ENCODE measurements at regions of chr19 and their contacts with region 1.

Region 1: GRCh38 chr19:15154002-15154612 is 46.7 kb downstream of the NOTCH3 start:
- DNase-seq: peak in 7 of 14 experiments; percentile 12 to 47 (median 33)
- ATAC-seq: peak; percentile 52
- H3K4me3 ChIP-seq: no peak overlapping the region
- H3K4me3 Mint-ChIP-seq: no peak overlapping the region
- H3K27ac ChIP-seq: no peak overlapping the region
- H3K27ac Mint-ChIP-seq: no peak overlapping the region
- H3K4me1 ChIP-seq: no peaks in the 10 kb centered on the region
- H3K4me1 Mint-ChIP-seq: peaks cover 6% of the 10 kb centered on the region
- H3K27me3 ChIP-seq: peaks cover 0 to 5% of the 10 kb centered on the region in 2 experiments
- H3K27me3 Mint-ChIP-seq: peaks cover 17% of the 10 kb centered on the region
- CTCF ChIP-seq: peak; percentile 47

Region 2: DNA sequence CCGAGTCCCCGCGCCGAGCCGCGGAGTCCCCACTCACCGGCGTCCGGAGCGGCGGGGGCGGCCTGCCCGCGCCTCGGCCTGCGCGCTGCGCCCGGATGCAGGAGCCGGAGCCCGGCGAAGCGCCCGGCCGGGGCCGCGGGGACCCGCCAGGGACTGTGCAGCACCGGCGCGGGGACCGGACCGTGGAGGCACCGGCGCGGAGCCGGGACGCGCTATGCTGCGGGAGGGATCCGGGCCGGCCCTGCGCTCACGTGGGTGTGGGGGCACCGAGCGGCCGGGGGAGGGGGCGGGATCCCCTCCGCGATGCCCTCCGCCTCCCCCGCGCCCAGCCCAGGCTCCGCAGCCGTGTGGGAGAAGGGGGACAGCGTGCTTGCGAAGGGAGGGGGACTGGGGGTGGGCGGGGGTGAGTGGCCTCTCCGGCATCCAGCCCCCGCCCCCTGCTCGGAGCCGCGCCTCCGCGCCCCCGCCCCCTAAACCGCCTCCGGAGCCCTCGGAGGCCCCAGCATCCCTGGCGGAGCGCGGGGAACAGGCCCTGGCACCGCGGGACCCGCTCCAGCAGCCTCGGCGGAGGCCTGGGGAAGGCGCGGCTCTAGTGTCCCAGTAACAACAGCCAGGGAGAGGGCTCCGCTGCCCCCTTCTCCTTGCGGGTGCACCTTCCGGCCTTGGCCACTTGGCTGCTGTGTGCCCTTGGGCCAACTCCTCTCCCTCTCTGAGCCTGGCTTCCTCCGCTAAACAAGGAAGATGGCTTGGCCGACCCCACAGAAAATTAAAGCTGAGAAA is 174.4 kb before region 1 on chr19 and contains the start of gene SLC1A6:
- CTCF ChIA-PET with region 1: no interaction called
- POLR2A ChIA-PET with region 1: no interaction called
- intact Hi-C with region 1: no loop called
- DNase-seq: no peak
- ATAC-seq: no peak
- H3K4me3 ChIP-seq: no peak within 1 kb of the TSS
- H3K4me3 Mint-ChIP-seq: peak within 1 kb of the TSS; percentile 56
- H3K27ac ChIP-seq: no peak within 1 kb of the TSS
- H3K27ac Mint-ChIP-seq: no peak within 1 kb of the TSS
- H3K4me1 ChIP-seq: no peaks in the 10 kb centered on the region
- H3K4me1 Mint-ChIP-seq: peaks cover 4% of the 10 kb centered on the region
- H3K27me3 ChIP-seq: peaks cover 41 to 49% of the 10 kb centered on the region in 2 experiments
- H3K27me3 Mint-ChIP-seq: peaks cover 73% of the 10 kb centered on the region
- CTCF ChIP-seq: no peak
- total RNA-seq, gene SLC1A6: not detected

Region 3: DNA sequence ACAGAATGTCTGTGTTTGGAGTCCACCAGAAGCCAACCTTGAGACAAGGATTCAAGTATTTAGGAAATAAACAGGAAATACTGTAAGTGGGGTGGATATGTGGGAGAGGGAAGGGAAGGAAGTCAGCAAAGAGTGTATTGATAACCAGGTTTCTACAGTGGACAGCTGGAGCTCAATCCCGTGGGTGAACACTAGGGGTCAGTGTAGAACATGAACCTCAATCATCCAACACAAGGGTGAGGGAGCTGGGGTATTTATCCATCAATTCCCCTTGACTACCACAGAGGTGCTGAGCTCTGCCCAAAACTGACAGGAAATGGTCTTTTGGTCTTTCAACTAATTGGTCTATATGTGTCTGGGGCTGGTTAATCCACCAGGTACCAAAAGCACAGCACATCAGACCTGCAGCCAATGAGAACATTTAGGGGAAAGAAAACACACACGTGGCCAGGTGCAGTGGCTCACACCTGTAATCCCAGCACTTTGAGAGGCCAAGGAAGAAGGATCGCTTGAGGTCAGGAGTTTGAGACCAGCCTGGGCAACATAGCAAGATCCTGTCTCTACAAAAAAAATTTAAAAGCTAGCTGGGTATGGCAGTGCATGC is 52.5 kb before region 1 on chr19:
- CTCF ChIA-PET with region 1: interaction called, 9 read pairs
- POLR2A ChIA-PET with region 1: no interaction called
- intact Hi-C with region 1: loop called (anchors 1 kb)
- DNase-seq: peak in 13 of 14 experiments; percentile 24 to 75 (median 42)
- ATAC-seq: peak; percentile 79
- H3K4me3 ChIP-seq: no peak overlapping the region
- H3K4me3 Mint-ChIP-seq: no peak overlapping the region
- H3K27ac ChIP-seq: no peak overlapping the region
- H3K27ac Mint-ChIP-seq: no peak overlapping the region
- H3K4me1 ChIP-seq: no peaks in the 10 kb centered on the region
- H3K4me1 Mint-ChIP-seq: peaks cover 7% of the 10 kb centered on the region
- H3K27me3 ChIP-seq: no peaks in the 10 kb centered on the region
- H3K27me3 Mint-ChIP-seq: peaks cover 7% of the 10 kb centered on the region
- CTCF ChIP-seq: peak; percentile 67

Region 4: DNA sequence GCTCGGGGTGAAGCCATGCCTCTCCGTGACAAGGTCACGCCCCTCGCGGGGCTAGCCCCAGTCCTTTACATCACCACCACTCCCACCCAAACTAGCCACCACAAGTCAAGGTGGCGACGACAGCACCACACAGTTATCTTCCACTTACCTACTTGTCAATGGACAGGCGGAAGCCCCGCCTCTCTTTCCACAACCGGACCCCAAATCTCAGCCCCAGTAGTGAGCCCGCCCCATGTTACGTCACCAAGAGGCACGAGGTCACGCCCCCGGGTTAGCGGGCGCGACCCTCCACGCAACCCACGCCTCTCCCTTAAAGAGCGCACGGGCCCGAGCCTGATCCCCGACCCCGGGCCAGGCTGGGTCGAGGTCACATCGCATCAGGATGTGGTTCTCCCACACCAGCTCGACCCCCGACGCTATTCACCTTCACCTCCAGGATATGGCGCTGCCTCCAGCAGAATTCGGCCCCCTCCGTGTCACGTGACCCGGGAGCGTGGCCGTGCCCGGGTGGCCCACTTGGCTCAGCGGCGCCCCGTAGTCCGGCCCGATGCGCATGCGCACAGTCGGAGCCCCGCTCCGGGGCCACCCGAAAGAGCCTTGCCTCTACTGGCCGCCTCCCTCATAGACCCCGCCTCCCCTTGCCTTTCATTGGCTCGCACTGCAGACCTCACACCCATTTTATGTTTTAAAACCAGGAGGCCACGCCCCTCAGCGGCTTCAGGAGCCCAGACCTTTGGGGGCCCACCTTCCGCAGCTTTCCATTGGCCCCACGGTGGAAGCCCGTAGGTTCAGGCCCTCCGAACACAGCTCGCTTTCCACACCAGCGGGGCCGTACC is 28.7 kb before region 1 on chr19:
- CTCF ChIA-PET with region 1: interaction called, 5 read pairs
- POLR2A ChIA-PET with region 1: no interaction called
- intact Hi-C with region 1: loop called in 1 of 2 experiments (anchors 2 kb)
- DNase-seq: peak; percentile 92 to 98 (median 96)
- ATAC-seq: peak; percentile 85
- H3K4me3 ChIP-seq: peak overlapping the region; percentile 77
- H3K4me3 Mint-ChIP-seq: peak overlapping the region; percentile 99
- H3K27ac ChIP-seq: peak overlapping the region; percentile 87 to 97
- H3K27ac Mint-ChIP-seq: peak overlapping the region; percentile 96
- H3K4me1 ChIP-seq: peaks cover 32% of the 10 kb centered on the region
- H3K4me1 Mint-ChIP-seq: peaks cover 49% of the 10 kb centered on the region
- H3K27me3 ChIP-seq: no peaks in the 10 kb centered on the region
- H3K27me3 Mint-ChIP-seq: no peaks in the 10 kb centered on the region
- CTCF ChIP-seq: no peak

Region 5: GRCh38 chr19:15374796-15375440 is 220.8 kb after region 1 on chr19:
- CTCF ChIA-PET with region 1: no interaction called
- POLR2A ChIA-PET with region 1: no interaction called
- intact Hi-C with region 1: no loop called
- DNase-seq: no peak
- ATAC-seq: no peak
- H3K4me3 ChIP-seq: no peak overlapping the region
- H3K4me3 Mint-ChIP-seq: peak overlapping the region; percentile 38
- H3K27ac ChIP-seq: no peak overlapping the region
- H3K27ac Mint-ChIP-seq: no peak overlapping the region
- H3K4me1 ChIP-seq: peaks cover 35% of the 10 kb centered on the region
- H3K4me1 Mint-ChIP-seq: peaks cover 32% of the 10 kb centered on the region
- H3K27me3 ChIP-seq: no peaks in the 10 kb centered on the region
- H3K27me3 Mint-ChIP-seq: no peaks in the 10 kb centered on the region
- CTCF ChIP-seq: no peak